Panc1 (cell line): ENCODE measurements at regions of chr16 and their contacts with region 1.

Region 1: DNA sequence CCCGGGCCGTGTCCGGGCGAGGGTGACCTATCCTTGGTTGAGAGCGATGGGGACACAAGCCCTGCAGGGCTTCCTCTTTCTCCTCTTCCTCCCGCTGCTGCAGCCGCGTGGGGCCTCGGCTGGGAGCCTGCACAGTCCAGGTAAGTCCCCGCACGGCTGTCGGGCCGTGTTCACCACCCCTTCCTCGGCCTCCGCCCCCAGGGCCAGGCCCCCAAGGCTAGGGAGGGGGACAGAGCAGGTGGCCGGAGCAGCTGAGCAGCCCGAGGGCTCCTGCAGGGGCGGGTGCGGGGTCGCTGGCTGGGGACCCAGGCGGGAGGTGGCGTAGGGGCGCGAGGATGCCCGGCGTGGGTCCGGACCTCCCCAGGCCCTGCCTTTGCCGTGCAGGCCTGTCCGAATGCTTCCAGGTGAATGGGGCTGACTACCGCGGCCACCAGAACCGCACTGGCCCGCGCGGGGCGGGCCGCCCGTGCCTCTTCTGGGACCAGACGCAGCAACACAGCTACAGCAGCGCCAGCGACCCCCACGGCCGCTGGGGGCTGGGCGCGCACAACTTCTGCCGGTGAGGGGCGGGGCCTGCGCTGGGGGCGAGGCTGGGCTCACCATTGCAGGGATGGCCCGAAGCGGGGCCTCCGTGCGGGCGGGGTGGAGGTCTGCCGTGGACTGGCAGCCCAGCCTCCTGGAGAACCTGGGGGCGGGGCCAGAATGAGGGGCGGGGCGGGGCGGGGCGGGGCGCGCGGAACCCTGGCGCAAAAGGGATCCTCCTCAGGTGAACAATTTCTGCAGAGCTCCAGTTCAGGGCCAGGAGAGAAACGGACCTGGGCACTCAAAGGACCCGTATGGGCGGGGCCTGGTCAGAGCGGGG is 631 bp downstream of the KREMEN2 start:
- DNase-seq: no peak
- ATAC-seq: peak; percentile 47
- H3K4me3 ChIP-seq: peak overlapping the region; percentile 56 to 81
- H3K27ac ChIP-seq: peak overlapping the region; percentile 79; the same call in 1 of the 2 replicates
- H3K4me1 ChIP-seq: peaks cover 23% of the 10 kb centered on the region
- H3K27me3 ChIP-seq: no peaks in the 10 kb centered on the region
- CTCF ChIP-seq: no peak; the same call in 1 of the 2 replicates

Region 2: GRCh38 chr16:2952679-2953078 is 12.0 kb before region 1 on chr16:
- CTCF ChIA-PET with region 1: interaction called, 14 read pairs
- POLR2A ChIA-PET with region 1: no interaction called
- in situ Hi-C with region 1: no loop called
- intact Hi-C with region 1: no loop called
- DNase-seq: no peak
- ATAC-seq: no peak
- H3K4me3 ChIP-seq: no peak overlapping the region
- H3K27ac ChIP-seq: no peak overlapping the region
- H3K4me1 ChIP-seq: peaks cover 5% of the 10 kb centered on the region; the same call in 1 of the 2 replicates
- H3K27me3 ChIP-seq: no peaks in the 10 kb centered on the region
- CTCF ChIP-seq: no peak

Region 3: DNA sequence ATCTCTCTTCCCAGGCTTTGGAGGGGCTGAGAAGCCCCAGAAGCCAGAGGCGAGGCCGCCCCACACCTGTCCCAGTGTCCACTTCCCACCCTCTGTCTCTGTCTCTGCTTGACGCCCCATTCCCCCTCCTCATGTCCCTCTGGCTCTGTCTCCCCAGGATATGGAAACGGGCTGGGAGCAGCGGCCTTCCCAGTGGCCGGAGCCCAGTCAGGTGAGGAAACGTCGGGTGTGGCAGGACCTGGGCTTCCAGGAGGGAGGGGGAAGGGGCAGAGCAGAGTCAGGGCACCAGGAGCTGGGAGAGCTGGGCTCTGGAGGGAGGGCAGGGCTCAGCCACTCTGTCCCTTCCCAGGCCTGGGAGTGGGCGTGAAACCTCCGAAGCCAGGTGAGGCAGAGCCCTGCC is 26.2 kb after region 1 on chr16:
- CTCF ChIA-PET with region 1: interaction called, 11 read pairs
- POLR2A ChIA-PET with region 1: interaction called, 3 read pairs
- in situ Hi-C with region 1: no loop called
- intact Hi-C with region 1: no loop called
- DNase-seq: no peak
- ATAC-seq: no peak
- H3K4me3 ChIP-seq: no peak overlapping the region
- H3K27ac ChIP-seq: no peak overlapping the region
- H3K4me1 ChIP-seq: no peaks in the 10 kb centered on the region
- H3K27me3 ChIP-seq: no peaks in the 10 kb centered on the region
- CTCF ChIP-seq: no peak